ENCODE measurements at regions of chr7 and their contacts with region 1.

Region 1: GRCh38 chr7:74173866-74174605 is at the start of gene EIF4H:
- DNase-seq: peak; percentile 97 to 99
- ATAC-seq: peak; percentile 96
- H3K4me3 ChIP-seq: peak within 1 kb of the TSS; percentile 84 to 88
- H3K27ac ChIP-seq: peak within 1 kb of the TSS; percentile 19 to 62
- H3K4me1 ChIP-seq: peaks cover 0 to 3% of the 10 kb centered on the region in 2 donors
- H3K27me3 ChIP-seq: no peaks in the 10 kb centered on the region
- total RNA-seq, gene EIF4H: 190 to 207 TPM

Region 2: DNA sequence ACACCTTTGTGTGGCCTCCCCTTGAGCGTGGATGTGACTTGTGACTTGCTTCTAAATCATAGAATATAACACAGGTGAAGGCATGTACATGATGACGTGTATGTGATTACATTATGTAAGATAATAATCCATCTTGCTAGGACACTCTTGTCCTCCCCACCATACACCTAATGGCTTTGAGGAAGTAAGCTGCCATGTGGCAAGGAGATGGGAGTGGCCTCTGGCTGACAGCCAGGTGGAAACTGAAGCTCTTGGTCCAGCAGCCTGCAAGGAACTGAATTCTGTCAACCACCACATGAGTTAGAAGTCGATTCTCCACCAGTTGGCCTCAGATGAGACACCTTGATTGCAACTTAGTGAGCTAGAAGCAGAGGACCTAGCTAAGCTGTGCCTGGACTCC is 213.5 kb before region 1 on chr7:
- intact Hi-C with region 1: no loop called
- DNase-seq: no peak
- ATAC-seq: no peak
- H3K4me3 ChIP-seq: no peak overlapping the region
- H3K27ac ChIP-seq: no peak overlapping the region
- H3K4me1 ChIP-seq: no peaks in the 10 kb centered on the region
- H3K27me3 ChIP-seq: no peaks in the 10 kb centered on the region

Region 3: GRCh38 chr7:74061840-74062539 is 112.0 kb before region 1 on chr7:
- intact Hi-C with region 1: loop called in 1 of 2 experiments (anchors 5 kb)
- DNase-seq: peak; percentile 94 to 95
- ATAC-seq: peak; percentile 92
- H3K4me3 ChIP-seq: no peak overlapping the region
- H3K27ac ChIP-seq: peak overlapping the region in 1 of 2 donors; percentile 88
- H3K4me1 ChIP-seq: no peaks in the 10 kb centered on the region
- H3K27me3 ChIP-seq: no peaks in the 10 kb centered on the region

Region 4: DNA sequence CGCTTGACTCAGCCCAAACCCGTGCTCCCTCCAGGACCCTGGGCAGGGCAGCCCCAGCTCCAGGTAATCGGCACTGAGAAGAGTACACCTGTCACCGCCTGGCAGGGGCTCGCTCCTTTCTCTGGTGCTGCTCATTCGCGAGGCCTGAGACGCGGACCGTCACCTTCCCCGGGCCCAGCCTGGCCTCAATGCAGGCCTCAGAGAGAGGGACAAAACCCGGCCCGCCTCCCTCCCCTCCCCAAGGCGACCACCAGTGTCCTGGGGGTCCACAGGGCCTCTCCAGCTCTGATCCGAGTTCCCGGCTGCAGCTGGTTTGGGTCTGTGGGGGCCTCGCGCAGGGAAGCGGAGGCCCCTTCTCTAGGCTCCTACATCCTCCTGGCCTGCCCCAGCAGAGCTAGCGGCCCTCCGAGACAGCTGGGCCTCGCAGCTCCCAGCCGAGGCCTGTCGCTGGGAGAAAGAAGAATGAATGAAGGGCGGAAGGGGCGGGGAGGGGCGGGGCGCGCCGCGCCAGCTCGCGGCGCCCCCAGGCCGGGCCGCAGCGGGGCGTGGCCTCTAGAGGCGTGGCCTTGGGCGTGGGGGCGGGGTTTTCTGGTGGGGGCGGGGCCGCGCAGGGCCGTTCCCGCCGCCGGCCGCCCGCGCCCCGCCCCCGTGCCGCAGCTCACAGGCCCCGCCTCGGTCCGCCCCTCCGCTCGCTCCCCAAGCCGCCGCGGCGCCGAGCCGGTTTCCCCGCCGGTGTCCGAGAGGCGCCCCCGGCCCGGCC is 90.7 kb before region 1 on chr7 and contains the start of gene LIMK1:
- intact Hi-C with region 1: loop called in 1 of 2 experiments (anchors 5 kb)
- DNase-seq: peak; percentile 87 to 93
- ATAC-seq: peak; percentile 89
- H3K4me3 ChIP-seq: peak within 1 kb of the TSS; percentile 93 to 98
- H3K27ac ChIP-seq: no peak within 1 kb of the TSS
- H3K4me1 ChIP-seq: peaks cover 0 to 3% of the 10 kb centered on the region in 2 donors
- H3K27me3 ChIP-seq: no peaks in the 10 kb centered on the region
- total RNA-seq, gene LIMK1: 14.7 to 18.9 TPM

Region 5: DNA sequence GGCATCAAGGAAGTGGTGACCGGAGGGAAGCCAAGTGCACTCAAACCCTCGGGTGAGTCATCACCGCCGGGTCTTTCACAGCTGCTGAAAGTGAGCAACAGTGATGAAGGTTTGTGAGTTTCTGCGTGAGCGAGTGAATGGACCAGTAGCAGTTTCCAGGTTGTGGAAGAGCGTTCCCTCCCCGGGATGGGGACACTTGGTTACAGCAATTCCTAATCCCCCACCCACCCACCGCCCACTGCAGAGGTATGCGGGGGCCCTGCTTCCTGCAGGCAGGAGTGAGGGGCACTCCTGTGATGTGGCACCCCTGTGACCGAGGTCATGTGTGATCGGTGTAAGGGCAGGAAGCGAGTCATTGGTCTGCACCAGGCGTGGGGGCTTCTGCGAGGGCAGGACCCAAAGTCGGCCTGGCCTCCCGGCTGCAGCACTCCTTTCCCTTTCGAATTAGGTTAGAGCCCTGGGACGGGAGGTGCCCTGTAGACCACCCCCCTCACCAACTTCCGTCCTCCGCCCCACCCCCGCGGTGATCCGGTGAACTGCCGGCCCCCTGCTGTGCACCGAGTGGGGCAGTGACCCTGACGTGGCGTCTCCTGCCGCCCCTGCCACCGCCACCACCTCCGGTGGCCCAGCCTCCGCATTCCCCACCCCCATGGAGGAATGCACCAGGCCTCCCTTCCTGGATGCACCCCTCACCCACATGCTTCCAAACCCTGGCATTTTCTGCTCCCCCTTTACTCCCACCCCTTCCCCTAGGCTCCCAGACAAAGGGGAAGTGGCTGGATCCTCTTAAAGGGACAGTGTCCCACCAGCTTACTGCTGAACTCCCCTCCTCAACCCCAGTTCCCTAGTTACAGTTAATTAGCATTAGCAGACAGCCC is 79.6 kb before region 1 on chr7:
- intact Hi-C with region 1: loop called in 1 of 2 experiments (anchors 1 kb)
- DNase-seq: peak; percentile 92
- ATAC-seq: peak; percentile 77
- H3K4me3 ChIP-seq: peak overlapping the region; percentile 2 to 18
- H3K27ac ChIP-seq: no peak overlapping the region
- H3K4me1 ChIP-seq: no peaks in the 10 kb centered on the region
- H3K27me3 ChIP-seq: no peaks in the 10 kb centered on the region